ENCODE measurements at regions of chr1 and their contacts with region 1.

Region 1: DNA sequence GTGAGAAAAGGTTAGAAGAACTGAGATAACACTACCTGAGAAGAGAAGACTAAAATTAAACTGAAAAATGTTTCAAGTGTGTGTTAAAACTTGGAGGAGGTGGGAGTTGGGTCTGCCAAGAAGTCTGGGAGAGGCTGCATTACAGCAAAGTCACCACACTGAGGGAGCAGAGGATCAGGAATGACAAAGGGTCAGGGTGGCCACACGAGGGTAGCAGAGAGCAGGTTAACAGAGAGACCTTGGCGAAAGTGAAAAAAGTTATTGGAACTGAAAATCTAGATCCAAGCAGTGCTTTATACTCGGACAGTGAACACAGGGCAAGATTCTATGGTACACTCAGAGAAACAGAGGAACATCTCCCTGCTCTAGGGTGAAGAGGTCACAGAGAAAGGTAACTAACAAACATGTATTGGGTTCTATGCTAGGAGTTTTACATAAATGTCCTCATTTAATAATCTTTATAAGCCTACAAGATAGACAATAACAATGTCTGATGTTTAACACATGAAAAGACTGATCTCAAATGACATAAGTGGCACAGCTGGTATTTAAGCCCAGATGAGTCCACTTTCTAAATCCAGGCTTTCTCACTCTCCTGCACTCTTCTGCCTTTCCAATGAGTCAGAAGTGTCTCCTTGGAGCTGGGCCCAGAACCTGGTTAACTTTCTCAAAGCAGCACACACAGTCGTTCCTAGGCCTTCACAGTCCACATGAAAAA is 10.3 kb upstream of the CADM3 start:
- DNase-seq: peak; percentile 63
- H3K4me3 ChIP-seq: no peak overlapping the region
- H3K27ac ChIP-seq: peak overlapping the region in 2 of 4 donors; percentile 35 to 63
- H3K4me1 ChIP-seq: peaks cover 0 to 4% (median 0%) of the 10 kb centered on the region in 4 donors
- H3K27me3 ChIP-seq: no peaks in the 10 kb centered on the region
- CTCF ChIP-seq: peak; percentile 85 to 93 (median 90)
- EP300 ChIP-seq: no peak
- POLR2A ChIP-seq: no peak

Region 2: GRCh38 chr1:158717344-158717743 is 443.8 kb before region 1 on chr1:
- in situ Hi-C with region 1: no loop called
- intact Hi-C with region 1: no loop called
- DNase-seq: no peak
- H3K4me3 ChIP-seq: no peak overlapping the region
- H3K27ac ChIP-seq: no peak overlapping the region
- H3K4me1 ChIP-seq: no peaks in the 10 kb centered on the region
- H3K27me3 ChIP-seq: no peaks in the 10 kb centered on the region
- CTCF ChIP-seq: no peak
- EP300 ChIP-seq: no peak
- POLR2A ChIP-seq: no peak

Region 3: DNA sequence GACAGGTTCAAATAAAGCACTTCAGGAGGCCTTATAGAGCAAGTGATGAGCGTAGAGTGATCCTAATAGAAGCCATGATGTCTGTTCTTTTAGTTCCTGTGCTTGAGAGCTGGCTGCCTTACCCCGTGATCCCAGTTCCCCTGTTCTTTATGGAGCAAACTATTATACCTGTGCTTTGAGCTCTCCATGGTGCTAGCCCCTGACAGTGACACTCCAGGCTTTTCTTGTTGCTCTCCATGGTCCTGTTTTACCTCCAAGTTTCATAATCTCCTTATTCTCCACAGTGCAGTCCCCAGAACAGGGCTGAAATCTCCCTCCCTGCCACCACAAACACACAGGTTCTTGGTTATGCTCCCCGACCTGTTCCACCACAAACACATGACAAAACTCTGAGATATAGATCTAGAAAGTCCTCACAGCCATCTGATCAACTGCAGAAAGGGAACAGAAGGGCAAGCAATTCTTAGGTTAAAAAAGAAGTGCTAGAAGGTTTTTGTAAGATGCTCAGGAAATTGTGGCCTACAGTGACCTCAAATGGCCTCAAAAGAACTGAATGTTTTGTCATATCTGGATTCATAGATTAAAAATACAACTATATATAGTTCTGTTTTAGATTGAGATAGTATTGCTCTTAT is 16.2 kb after region 1 on chr1:
- in situ Hi-C with region 1: no loop called
- intact Hi-C with region 1: loop called (anchors 1 kb)
- DNase-seq: peak; percentile 22
- H3K4me3 ChIP-seq: no peak overlapping the region
- H3K27ac ChIP-seq: no peak overlapping the region
- H3K4me1 ChIP-seq: peaks cover 0 to 4% (median 0%) of the 10 kb centered on the region in 4 donors
- H3K27me3 ChIP-seq: peaks cover 13% of the 10 kb centered on the region
- CTCF ChIP-seq: no peak
- EP300 ChIP-seq: no peak
- POLR2A ChIP-seq: no peak

Region 4: GRCh38 chr1:159197561-159198557 is 36.7 kb after region 1 on chr1:
- in situ Hi-C with region 1: no loop called
- intact Hi-C with region 1: loop called (anchors 5 kb)
- DNase-seq: peak; percentile 66
- H3K4me3 ChIP-seq: no peak overlapping the region
- H3K27ac ChIP-seq: no peak overlapping the region
- H3K4me1 ChIP-seq: no peaks in the 10 kb centered on the region
- H3K27me3 ChIP-seq: peaks cover 16% of the 10 kb centered on the region
- CTCF ChIP-seq: peak; percentile 74 to 83 (median 76)
- EP300 ChIP-seq: no peak
- POLR2A ChIP-seq: no peak

Region 5: GRCh38 chr1:159669338-159669737 is 508.2 kb after region 1 on chr1:
- in situ Hi-C with region 1: no loop called
- intact Hi-C with region 1: no loop called
- DNase-seq: no peak
- H3K4me3 ChIP-seq: no peak overlapping the region
- H3K27ac ChIP-seq: no peak overlapping the region
- H3K4me1 ChIP-seq: no peaks in the 10 kb centered on the region
- H3K27me3 ChIP-seq: no peaks in the 10 kb centered on the region
- CTCF ChIP-seq: no peak
- EP300 ChIP-seq: no peak
- POLR2A ChIP-seq: no peak